ENCODE measurements at regions of chr1 and their contacts with region 1.

Region 1: DNA sequence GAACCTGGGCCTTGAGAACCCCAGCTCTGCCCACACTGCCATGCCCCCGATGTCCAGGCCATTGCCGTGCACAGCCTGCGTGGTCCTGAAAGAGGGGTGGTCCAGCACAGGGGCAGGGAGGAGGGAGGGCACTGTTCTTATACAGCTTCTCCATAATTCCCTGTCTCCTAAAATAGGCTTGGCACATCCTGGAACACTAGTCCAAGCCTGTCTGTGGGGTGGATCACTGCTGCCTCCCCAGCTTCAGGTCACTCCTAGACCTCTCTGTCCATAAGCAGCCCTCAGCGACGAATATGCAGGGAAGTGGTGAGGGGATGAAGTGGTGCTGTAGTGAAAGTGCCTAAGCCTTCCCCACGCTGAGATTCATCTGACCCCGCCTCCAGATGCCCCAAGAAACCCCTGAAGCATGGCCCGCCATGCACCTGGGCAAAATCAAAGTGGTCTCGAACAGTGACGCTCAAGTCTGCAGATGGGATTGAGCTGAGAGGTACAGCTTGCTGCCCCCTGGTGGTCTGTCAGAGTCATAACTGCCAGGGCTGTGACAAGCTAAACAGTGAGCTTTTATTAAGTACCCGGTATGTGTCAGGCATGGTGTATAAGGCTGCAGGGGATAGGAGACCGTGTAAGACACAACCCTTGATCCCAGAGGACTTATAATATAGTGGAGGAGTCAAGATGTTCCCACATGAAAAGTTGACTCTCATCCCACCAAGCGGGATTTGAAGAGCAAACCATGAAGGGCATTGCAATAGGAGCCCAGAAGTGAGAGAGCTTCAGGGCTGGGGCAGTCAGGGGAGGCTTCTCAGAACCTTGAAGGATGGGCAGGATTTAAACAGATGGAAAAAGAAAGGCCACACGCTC is 66.6 kb downstream of the FAM163A start:
- DNase-seq: peak; percentile 24
- H3K4me3 ChIP-seq: no peak overlapping the region
- CTCF ChIP-seq: peak; percentile 91

Region 2: GRCh38 chr1:179251675-179252074 is 558.1 kb before region 1 on chr1:
- CTCF ChIA-PET with region 1: interaction called, 25 read pairs
- POLR2A ChIA-PET with region 1: no interaction called
- DNase-seq: no peak
- H3K4me3 ChIP-seq: no peak overlapping the region
- CTCF ChIP-seq: peak; percentile 35

Region 3: GRCh38 chr1:179476484-179476883 is 333.3 kb before region 1 on chr1:
- CTCF ChIA-PET with region 1: no interaction called
- POLR2A ChIA-PET with region 1: no interaction called
- DNase-seq: no peak
- H3K4me3 ChIP-seq: no peak overlapping the region
- CTCF ChIP-seq: no peak

Region 4: DNA sequence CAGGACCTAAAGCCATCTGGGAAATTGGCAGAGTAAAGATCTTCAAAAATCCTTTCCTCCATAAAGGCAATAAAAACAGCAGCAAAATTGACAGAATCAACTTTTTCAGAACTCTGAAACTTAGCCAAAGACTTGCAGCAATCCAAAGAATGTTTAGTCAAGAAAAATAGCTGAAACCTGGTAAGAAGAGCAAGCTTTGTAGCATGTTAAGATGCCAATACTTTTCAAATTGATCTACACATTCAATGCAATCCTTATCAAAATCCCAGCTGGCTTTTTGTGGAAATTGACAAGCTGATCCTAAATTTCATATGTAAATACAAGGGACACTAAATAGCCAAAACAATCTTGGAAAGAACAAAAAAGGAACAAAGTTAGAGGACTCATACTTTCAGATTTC is 90.5 kb before region 1 on chr1:
- CTCF ChIA-PET with region 1: interaction called, 17 read pairs
- POLR2A ChIA-PET with region 1: no interaction called
- DNase-seq: no peak
- H3K4me3 ChIP-seq: no peak overlapping the region
- CTCF ChIP-seq: no peak

Region 5: DNA sequence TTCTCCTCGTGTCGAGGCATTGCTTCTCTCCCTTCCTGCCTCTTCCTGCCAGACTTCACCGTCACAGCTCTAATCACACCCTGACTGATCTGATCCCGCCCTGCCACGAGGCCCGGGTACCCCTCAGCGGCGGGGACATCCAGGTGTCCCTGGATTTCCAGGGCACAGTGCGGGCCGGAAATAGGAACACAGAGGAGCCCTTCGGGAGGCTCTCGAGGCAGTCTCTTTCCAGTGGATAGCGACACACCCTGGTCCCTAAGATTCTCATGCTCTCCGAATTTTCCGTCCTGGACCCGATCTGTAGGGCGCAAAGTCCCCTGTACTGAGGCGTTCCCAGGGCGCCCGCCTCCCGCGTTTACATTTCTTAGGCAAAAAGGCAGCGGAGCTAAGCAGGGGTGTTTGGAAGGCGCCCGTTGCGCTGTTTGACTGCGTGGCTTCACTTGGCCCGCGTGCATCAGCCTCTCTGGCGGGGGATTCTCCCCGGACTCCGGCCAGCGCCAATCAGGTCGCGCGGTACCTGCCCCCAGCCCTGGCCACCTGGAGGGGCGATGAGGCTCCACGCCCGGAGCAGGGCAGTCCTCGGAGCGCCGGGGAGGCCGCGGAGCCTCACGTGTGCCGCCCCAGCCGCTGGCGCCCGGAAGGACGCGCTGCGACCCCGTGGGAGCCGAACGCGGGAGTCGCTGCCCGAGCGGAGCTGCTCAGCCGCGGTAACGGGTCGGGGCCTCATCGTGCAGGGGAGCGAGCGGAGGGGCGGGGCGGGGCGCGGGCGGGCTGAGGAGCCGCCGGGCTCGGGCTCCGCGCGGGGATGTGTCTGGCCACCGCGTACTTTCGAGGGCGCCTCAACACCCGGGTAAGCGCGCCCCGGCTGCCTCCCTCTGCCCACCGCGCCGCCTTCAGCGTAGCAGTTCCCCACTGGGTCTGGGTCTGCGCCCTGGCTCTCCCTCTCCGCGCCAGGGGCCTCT is 66.7 kb before region 1 on chr1 and contains the start of gene FAM163A:
- CTCF ChIA-PET with region 1: interaction called, 12 read pairs
- POLR2A ChIA-PET with region 1: no interaction called
- DNase-seq: no peak
- H3K4me3 ChIP-seq: no peak within 1 kb of the TSS; the same call in 1 of the 2 replicates
- CTCF ChIP-seq: no peak

Region 6: GRCh38 chr1:179779645-179780272 is 30.0 kb before region 1 on chr1:
- CTCF ChIA-PET with region 1: interaction called, 251 read pairs
- POLR2A ChIA-PET with region 1: no interaction called
- DNase-seq: no peak
- H3K4me3 ChIP-seq: no peak overlapping the region
- CTCF ChIP-seq: no peak

Region 7: GRCh38 chr1:179824265-179824664 is 14.5 kb after region 1 on chr1:
- CTCF ChIA-PET with region 1: interaction called, 89 read pairs
- POLR2A ChIA-PET with region 1: no interaction called
- DNase-seq: no peak
- H3K4me3 ChIP-seq: no peak overlapping the region
- CTCF ChIP-seq: no peak

Region 8: DNA sequence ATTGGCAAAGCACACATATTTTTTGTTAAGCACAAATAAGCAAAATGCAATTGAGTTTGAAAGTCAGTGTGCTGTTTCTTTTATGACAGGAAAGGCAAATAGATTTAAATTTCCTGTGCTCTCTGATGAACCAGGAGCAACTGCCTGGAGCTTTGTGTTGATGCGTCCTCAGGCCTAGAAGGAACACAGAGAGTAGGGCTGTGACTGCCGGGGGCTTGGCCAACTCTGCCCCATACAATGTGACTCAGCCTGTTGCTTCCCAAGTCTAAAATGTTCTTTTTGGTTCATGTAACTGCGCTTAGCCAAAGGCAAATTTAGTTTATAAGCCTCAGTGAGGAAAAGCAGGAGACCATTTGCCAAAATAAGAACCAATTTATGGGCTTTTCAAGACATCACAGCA is 30.4 kb after region 1 on chr1:
- CTCF ChIA-PET with region 1: interaction called, 19 read pairs
- POLR2A ChIA-PET with region 1: no interaction called
- DNase-seq: no peak
- H3K4me3 ChIP-seq: no peak overlapping the region
- CTCF ChIP-seq: no peak